K562 (cell line): ENCODE measurements at regions of chr9 and their contacts with region 1.

Region 1: DNA sequence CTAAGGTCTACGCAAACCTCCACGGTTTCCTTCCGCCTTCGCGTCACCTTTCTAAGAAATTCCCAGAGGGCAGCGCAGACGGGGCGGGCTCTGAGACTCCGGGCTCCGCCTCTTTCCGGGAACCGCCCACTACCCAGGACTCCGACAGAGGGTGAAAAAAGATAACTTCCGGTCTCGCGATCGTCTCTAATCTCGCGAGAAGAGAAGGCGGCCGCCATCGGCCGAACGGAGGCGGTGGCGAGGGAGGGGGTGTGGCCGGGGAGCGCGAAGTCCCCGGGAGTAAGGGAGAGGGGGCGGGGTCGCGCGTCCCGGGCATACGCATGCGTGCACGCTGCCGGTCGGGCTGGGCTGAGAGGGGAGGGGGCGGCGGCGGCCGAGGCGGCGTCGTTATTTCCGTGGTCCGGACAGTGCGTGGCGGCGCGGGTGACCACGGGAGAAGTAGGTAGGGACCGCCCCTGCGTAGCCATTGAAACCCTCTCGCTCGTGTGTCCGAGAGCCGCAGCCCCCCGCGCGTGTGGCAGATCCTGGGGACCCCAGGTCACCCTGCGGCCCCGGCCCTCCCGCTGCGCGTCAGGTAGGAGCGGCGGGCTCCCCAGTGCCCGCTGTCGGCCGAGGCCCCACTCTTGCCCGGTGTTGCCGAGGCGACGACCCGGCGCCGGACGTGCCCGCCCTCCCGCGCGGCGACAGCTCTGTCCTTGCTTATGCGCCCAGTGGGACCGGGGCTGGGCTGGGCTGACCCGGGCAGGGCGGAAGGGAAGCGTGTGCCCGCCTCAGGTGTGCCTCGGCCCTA is at the start of gene NAA35:
- DNase-seq: peak; percentile 96 to 97 (median 96)
- ATAC-seq: peak; percentile 90
- H3K4me3 ChIP-seq: peak within 1 kb of the TSS; percentile 98
- H3K27ac ChIP-seq: peak within 1 kb of the TSS; percentile 92
- H3K4me1 ChIP-seq: peaks cover 7 to 15% of the 10 kb centered on the region in 2 experiments; a peak in 3 of 5 replicates
- H3K27me3 ChIP-seq: no peaks in the 10 kb centered on the region
- CTCF ChIP-seq: peak in 1 of 3 experiments; percentile 33; a peak in 2 of 6 replicates
- EP300 ChIP-seq: no peak; the same call in 1 of the 2 replicates
- POLR2A ChIP-seq: no peak
- RAD21 ChIP-seq: no peak
- polyA plus RNA-seq, gene NAA35: 22.1 to 23.6 TPM

Region 2: DNA sequence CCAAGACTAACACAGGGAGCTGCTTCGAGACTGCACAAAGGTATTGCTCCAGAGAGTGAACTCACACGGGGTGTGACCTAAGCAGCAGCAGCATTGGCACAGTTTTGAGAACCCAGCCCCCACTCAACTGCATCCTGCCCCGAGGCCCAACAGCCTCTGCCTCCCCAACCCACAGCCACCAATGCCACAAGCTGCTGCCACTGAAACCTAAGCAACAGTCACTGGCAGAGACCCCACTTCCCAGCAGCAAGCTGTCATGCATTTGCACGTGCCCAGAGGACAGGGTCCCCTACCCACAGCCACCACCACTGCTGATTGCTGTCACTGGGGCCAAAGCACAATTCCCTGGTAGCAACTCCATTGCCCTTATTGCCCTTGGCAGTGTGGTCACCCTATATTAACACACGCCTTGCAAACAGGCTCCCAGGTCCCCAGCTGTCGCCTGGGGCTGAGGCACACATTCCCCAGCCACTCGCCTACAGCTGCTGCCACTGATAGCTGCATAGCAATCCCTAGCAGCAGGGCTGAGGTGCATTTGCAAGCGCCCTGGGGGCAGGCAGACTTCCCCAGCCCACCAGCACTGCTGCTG is 340.3 kb before region 1 on chr9:
- CTCF ChIA-PET with region 1: no interaction called
- POLR2A ChIA-PET with region 1: no interaction called
- in situ Hi-C with region 1: no loop called
- intact Hi-C with region 1: no loop called
- DNase-seq: no peak
- ATAC-seq: no peak
- H3K4me3 ChIP-seq: no peak overlapping the region
- H3K27ac ChIP-seq: no peak overlapping the region
- H3K4me1 ChIP-seq: no peaks in the 10 kb centered on the region
- H3K27me3 ChIP-seq: no peaks in the 10 kb centered on the region
- CTCF ChIP-seq: no peak
- EP300 ChIP-seq: no peak
- POLR2A ChIP-seq: no peak
- RAD21 ChIP-seq: no peak

Region 3: DNA sequence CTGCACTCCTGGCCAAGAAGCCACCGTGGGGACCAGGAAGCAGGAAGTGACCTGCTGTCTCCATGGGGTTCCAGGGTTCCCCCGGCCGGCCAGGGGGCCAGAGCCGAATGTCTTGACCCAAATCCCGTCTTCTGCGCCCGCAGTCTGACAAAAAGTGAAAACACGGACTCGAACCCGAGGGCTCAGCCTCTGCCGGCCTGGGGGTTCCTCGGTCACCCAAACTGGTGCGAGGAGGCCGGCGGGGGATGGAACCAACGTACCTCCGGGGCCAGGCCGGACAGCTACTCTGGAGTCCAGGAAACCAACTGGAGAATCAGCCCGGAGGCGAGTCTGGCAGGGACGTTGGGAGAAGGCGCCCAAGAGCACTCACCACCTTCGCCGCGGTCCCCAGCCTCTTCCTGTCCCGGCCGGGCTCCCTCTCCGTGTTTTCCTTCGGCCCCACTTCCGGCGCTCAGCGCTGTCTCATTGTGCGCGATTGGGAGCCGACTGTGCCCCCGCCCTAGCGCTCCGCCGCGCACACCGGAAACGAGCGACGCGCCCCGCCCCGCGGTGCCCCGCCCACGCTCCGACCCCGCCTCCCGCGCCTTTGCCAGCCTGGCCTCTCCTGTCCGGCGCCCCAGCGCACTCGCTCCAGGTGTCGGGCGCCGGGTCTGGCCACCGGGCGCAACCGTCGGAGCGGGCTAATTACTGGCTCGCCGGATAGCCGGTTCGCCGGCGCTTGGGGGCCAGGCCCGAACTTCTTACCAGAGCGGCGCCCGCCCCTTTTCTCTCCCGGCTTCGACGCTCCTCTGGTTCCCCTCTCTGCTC is 413.2 kb after region 1 on chr9 and contains the start of gene TUT7:
- CTCF ChIA-PET with region 1: no interaction called
- POLR2A ChIA-PET with region 1: no interaction called
- in situ Hi-C with region 1: no loop called
- intact Hi-C with region 1: loop called (anchors 10 kb)
- DNase-seq: peak; percentile 85 to 93 (median 86)
- ATAC-seq: peak; percentile 89
- H3K4me3 ChIP-seq: peak within 1 kb of the TSS; percentile 95
- H3K27ac ChIP-seq: peak within 1 kb of the TSS; percentile 93
- H3K4me1 ChIP-seq: peaks cover 5% of the 10 kb centered on the region in 2 experiments; a peak in 4 of 5 replicates
- H3K27me3 ChIP-seq: no peaks in the 10 kb centered on the region
- CTCF ChIP-seq: no peak
- EP300 ChIP-seq: no peak
- POLR2A ChIP-seq: peak; percentile 73
- RAD21 ChIP-seq: no peak
- polyA plus RNA-seq, gene TUT7: 5.9 to 9.3 TPM